Activated CD4-positive, alpha-beta memory T cell treated with anti-CD3 and anti-CD28 coated beads for 36 hours (primary cell): ENCODE measurements at regions of chr14 and their contacts with region 1.

Region 1: GRCh38 chr14:75560962-75561432 is 17.4 kb upstream of the FLVCR2 start:
- DNase-seq: peak; percentile 68
- H3K4me3 Mint-ChIP-seq: no peak overlapping the region
- H3K27ac Mint-ChIP-seq: peak overlapping the region; percentile 97
- H3K4me1 Mint-ChIP-seq: peaks cover 86% of the 10 kb centered on the region
- H3K27me3 Mint-ChIP-seq: no peaks in the 10 kb centered on the region

Region 2: GRCh38 chr14:75249251-75249957 is 311.6 kb before region 1 on chr14:
- CTCF ChIA-PET with region 1: no interaction called
- POLR2A ChIA-PET with region 1: no interaction called
- intact Hi-C with region 1: loop called (anchors 5 kb)
- DNase-seq: peak; percentile 93
- H3K4me3 Mint-ChIP-seq: peak overlapping the region; percentile 33
- H3K27ac Mint-ChIP-seq: peak overlapping the region; percentile 64
- H3K4me1 Mint-ChIP-seq: peaks cover 55% of the 10 kb centered on the region
- H3K27me3 Mint-ChIP-seq: peaks cover 4% of the 10 kb centered on the region

Region 3: GRCh38 chr14:75497191-75497590 is 63.8 kb before region 1 on chr14:
- CTCF ChIA-PET with region 1: interaction called, 8 read pairs
- POLR2A ChIA-PET with region 1: interaction called, 4 read pairs
- intact Hi-C with region 1: loop called (anchors 1 kb)
- DNase-seq: peak; percentile 75
- H3K4me3 Mint-ChIP-seq: peak overlapping the region; percentile 59
- H3K27ac Mint-ChIP-seq: peak overlapping the region; percentile 82
- H3K4me1 Mint-ChIP-seq: peaks cover 54% of the 10 kb centered on the region
- H3K27me3 Mint-ChIP-seq: no peaks in the 10 kb centered on the region

Region 4: GRCh38 chr14:75531660-75532317 is 29.2 kb before region 1 on chr14:
- CTCF ChIA-PET with region 1: interaction called, 19 read pairs
- POLR2A ChIA-PET with region 1: interaction called, 13 read pairs
- intact Hi-C with region 1: no loop called
- DNase-seq: no peak
- H3K4me3 Mint-ChIP-seq: peak overlapping the region; percentile 45
- H3K27ac Mint-ChIP-seq: peak overlapping the region; percentile 70
- H3K4me1 Mint-ChIP-seq: peaks cover 84% of the 10 kb centered on the region
- H3K27me3 Mint-ChIP-seq: no peaks in the 10 kb centered on the region

Region 5: GRCh38 chr14:75542588-75543091 is 18.4 kb before region 1 on chr14:
- CTCF ChIA-PET with region 1: interaction called, 91 read pairs
- POLR2A ChIA-PET with region 1: interaction called, 76 read pairs
- intact Hi-C with region 1: loop called (anchors 1 kb)
- DNase-seq: peak; percentile 95
- H3K4me3 Mint-ChIP-seq: peak overlapping the region; percentile 68
- H3K27ac Mint-ChIP-seq: peak overlapping the region; percentile 99
- H3K4me1 Mint-ChIP-seq: peaks cover 83% of the 10 kb centered on the region
- H3K27me3 Mint-ChIP-seq: no peaks in the 10 kb centered on the region

Region 6: DNA sequence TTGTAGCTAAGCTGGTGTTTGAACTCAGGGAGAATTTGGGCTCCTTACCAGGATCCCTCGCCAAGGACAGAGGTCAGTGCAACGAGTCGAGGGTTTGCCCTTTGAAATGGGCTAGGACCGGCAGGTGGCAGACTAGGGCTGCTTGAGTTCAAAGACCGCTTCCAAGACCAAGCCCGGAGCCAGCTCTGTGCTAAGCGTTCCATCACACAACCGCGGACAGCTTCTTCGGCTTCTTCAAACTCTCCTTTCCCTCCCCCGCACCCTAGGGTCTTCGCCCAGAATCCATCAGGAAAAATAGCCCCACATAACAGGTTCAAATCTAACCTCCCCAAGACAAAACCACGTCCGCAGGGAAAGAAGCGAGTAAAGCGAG is 16.7 kb after region 1 on chr14:
- CTCF ChIA-PET with region 1: interaction called, 70 read pairs
- POLR2A ChIA-PET with region 1: interaction called, 7 read pairs
- intact Hi-C with region 1: no loop called
- DNase-seq: peak; percentile 87
- H3K4me3 Mint-ChIP-seq: peak overlapping the region; percentile 86
- H3K27ac Mint-ChIP-seq: peak overlapping the region; percentile 88
- H3K4me1 Mint-ChIP-seq: peaks cover 13% of the 10 kb centered on the region
- H3K27me3 Mint-ChIP-seq: no peaks in the 10 kb centered on the region